ENCODE measurements at regions of chr5 and their contacts with region 1.

Region 1: DNA sequence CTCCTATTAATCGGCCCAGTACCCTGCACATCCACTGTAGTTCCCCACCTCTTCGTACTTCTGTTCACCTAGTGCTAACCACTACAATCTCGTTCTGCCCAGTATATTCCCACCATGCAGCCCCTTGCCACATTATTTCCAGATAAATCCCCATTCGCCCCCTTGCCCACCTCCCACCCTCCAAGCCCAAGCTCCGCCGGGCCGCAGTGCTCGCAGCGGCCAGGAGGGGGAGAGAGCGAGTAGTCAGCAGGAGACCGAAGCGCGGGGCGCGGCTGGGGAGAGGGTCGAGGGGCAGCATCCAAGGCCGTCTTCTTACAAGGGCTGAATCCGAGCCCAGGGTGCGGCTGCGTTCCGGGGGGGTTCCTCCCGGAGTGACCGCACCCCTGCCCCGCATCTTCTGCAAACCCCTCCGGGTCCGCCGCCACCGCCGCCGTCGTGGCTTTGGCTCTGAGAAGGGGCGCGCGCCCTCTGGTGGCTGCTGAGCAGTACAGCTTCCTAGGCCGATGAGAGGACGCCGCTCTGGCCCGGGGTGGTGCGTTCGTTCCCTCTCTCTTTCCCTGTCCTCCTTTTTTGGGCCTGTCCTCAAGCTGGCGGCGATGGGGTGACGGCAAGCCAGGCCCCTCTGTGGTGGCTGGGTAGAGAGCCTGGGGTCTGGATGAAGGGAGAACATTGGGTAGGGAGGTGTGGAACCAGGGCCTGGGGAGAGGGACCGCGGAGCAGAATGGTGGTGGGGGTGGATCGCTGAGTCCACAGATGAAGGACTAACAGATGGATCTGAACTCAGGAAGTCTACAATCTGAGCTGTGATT is 30.0 kb upstream of the PSD2 start:
- DNase-seq: peak; percentile 85 to 95
- ATAC-seq: peak; percentile 95
- H3K4me3 ChIP-seq: peak overlapping the region in 1 of 2 donors; percentile 30
- H3K27ac ChIP-seq: no peak overlapping the region
- H3K4me1 ChIP-seq: no peaks in the 10 kb centered on the region
- H3K27me3 ChIP-seq: no peaks in the 10 kb centered on the region

Region 2: GRCh38 chr5:139690064-139690802 is 75.4 kb before region 1 on chr5:
- intact Hi-C with region 1: loop called (anchors 5 kb)
- DNase-seq: peak; percentile 71 to 90
- ATAC-seq: peak; percentile 15
- H3K4me3 ChIP-seq: no peak overlapping the region
- H3K27ac ChIP-seq: no peak overlapping the region
- H3K4me1 ChIP-seq: no peaks in the 10 kb centered on the region
- H3K27me3 ChIP-seq: no peaks in the 10 kb centered on the region

Measured in aorta (tissue), 5 donors.